Colonic mucosa (tissue), 4 donors: ENCODE measurements at regions of chr5 and their contacts with region 1.

Region 1: GRCh38 chr5:132007399-132008165 is 3.9 kb downstream of the ACSL6 start:
- DNase-seq: peak; percentile 85
- H3K4me3 ChIP-seq: no peak overlapping the region
- H3K27ac ChIP-seq: no peak overlapping the region
- H3K4me1 ChIP-seq: no peaks in the 10 kb centered on the region
- H3K27me3 ChIP-seq: peaks cover 16% of the 10 kb centered on the region
- CTCF ChIP-seq: peak; percentile 80

Region 2: DNA sequence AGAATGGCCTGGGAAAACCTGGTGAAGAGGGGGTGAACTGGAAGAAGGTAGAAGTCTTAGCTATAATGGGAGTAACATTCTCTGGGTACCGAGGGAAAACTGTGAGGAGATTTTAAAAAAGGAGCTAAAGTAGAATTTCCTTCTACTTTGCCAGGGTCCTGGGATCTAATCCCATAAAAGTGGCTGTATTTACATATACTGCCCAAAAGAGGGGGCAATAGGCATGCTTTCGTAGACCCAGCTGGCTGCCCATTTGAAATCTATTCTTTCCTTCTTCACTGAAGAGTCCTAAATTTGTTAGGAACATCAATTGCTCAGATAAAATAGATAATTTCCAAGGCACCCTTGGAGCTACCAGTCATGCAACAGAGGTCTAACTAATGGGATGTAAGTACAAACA is 584.5 kb before region 1 on chr5:
- intact Hi-C with region 1: loop called (anchors 10 kb)
- DNase-seq: no peak
- H3K4me3 ChIP-seq: no peak overlapping the region
- H3K27ac ChIP-seq: no peak overlapping the region
- H3K4me1 ChIP-seq: no peaks in the 10 kb centered on the region
- H3K27me3 ChIP-seq: no peaks in the 10 kb centered on the region
- CTCF ChIP-seq: no peak